CD8-positive, alpha-beta T cell (primary cell): ENCODE measurements at regions of chr18 and their contacts with region 1.

Region 1: GRCh38 chr18:35267161-35267651 is 22.8 kb downstream of the ZSCAN30 start:
- DNase-seq: peak; percentile 44 to 86 (median 74)
- ATAC-seq: peak; percentile 84
- H3K4me3 ChIP-seq: peak overlapping the region; percentile 77 to 84
- H3K4me3 Mint-ChIP-seq: peak overlapping the region; percentile 97
- H3K27ac ChIP-seq: peak overlapping the region; percentile 69 to 87
- H3K27ac Mint-ChIP-seq: peak overlapping the region; percentile 97
- H3K4me1 ChIP-seq: peaks cover 7% of the 10 kb centered on the region
- H3K4me1 Mint-ChIP-seq: peaks cover 26% of the 10 kb centered on the region
- H3K27me3 ChIP-seq: no peaks in the 10 kb centered on the region
- H3K27me3 Mint-ChIP-seq: no peaks in the 10 kb centered on the region
- CTCF ChIP-seq: no peak

Region 2: GRCh38 chr18:35290073-35290735 is 23.0 kb after region 1 on chr18 and contains the start of gene ZSCAN30:
- CTCF ChIA-PET with region 1: no interaction called
- POLR2A ChIA-PET with region 1: interaction called, 33 read pairs
- intact Hi-C with region 1: loop called (anchors 1 kb)
- DNase-seq: peak; percentile 92 to 98 (median 96)
- ATAC-seq: peak; percentile 94
- H3K4me3 ChIP-seq: peak within 1 kb of the TSS; percentile 78 to 82
- H3K4me3 Mint-ChIP-seq: peak within 1 kb of the TSS; percentile 99
- H3K27ac ChIP-seq: peak within 1 kb of the TSS; percentile 69 to 85
- H3K27ac Mint-ChIP-seq: peak within 1 kb of the TSS; percentile 99
- H3K4me1 ChIP-seq: peaks cover 17% of the 10 kb centered on the region
- H3K4me1 Mint-ChIP-seq: peaks cover 70% of the 10 kb centered on the region
- H3K27me3 ChIP-seq: no peaks in the 10 kb centered on the region
- H3K27me3 Mint-ChIP-seq: no peaks in the 10 kb centered on the region
- CTCF ChIP-seq: no peak
- total RNA-seq, gene ZSCAN30: 6.2 to 6.3 TPM

Region 3: DNA sequence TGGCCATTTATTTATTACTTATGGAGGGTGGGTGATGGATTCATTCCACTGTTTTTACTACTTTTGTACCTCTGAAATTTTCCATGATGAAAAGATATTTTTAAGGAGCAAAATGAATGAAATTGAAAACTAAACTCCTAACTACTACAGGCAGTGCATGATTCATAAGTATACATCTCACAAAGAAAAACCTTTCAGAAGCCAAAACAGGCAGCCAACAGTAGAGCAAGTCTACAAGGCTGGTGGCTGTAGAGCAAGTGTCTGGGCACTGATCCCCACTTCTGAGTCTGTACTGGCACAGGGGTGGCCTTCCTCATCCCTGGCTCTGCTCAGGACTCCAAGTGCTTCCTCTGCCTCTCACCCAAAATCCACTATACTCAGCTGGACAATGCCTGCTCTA is 697.1 kb after region 1 on chr18:
- CTCF ChIA-PET with region 1: no interaction called
- POLR2A ChIA-PET with region 1: no interaction called
- intact Hi-C with region 1: no loop called
- DNase-seq: no peak
- ATAC-seq: no peak
- H3K4me3 ChIP-seq: no peak overlapping the region
- H3K4me3 Mint-ChIP-seq: no peak overlapping the region
- H3K27ac ChIP-seq: no peak overlapping the region
- H3K27ac Mint-ChIP-seq: no peak overlapping the region
- H3K4me1 ChIP-seq: peaks cover 8% of the 10 kb centered on the region
- H3K4me1 Mint-ChIP-seq: peaks cover 14% of the 10 kb centered on the region
- H3K27me3 ChIP-seq: no peaks in the 10 kb centered on the region
- H3K27me3 Mint-ChIP-seq: peaks cover 4% of the 10 kb centered on the region
- CTCF ChIP-seq: no peak